ENCODE measurements at regions of chr9 and their contacts with region 1.

Region 1: DNA sequence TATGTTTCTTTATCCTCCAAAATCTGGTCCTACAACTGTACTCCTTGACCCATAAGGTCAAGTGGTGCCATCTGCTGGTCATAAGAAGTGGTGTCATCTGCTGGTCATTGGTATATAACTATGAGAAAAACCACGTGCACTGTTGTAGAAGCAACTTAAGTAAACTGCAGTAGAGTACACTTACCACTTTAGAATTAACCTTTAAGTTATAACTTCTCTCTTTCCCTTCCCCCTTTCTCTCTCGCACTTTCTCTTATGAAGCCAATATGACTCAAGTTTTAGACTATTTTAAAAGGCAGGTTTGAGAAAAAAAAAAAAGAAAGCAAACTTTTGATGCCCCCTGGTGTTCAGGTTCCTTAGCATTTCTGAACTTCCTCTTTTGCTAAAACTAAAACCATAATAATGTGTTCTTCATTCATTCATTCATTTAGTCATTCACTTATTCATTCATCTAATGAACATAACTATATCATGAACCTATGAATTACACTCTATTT is 12.8 kb upstream of the MTAP start:
- DNase-seq: no peak
- ATAC-seq: peak; percentile 71 to 95 (median 88)
- H3K4me3 ChIP-seq: peak overlapping the region; percentile 28
- H3K27ac ChIP-seq: no peak overlapping the region
- H3K4me1 ChIP-seq: no peaks in the 10 kb centered on the region
- H3K27me3 ChIP-seq: peaks cover 0 to 11% (median 7%) of the 10 kb centered on the region in 3 donors
- CTCF ChIP-seq: peak; percentile 81

Region 2: DNA sequence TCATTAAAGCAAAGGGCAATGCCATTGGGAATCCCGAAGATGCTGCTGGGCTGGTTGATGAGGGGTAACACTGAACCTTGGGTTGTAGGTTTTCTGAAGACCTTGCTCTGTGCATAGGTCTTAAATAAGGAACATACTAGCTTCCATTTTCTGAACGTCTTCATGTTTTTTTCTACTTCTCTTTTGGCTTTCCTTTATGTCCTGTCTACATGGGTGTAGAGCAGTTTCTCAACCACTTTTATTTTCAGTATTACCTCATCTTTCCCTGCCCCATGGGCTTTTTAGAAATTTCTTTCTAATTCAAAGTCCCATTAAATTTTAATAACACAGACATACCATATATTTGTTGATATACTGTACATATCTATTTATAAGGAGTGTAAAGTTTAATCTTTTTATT is 549.7 kb before region 1 on chr9 and contains the start of gene IFNA14:
- intact Hi-C with region 1: loop called in 1 of 2 experiments (anchors 5 kb)
- DNase-seq: no peak
- ATAC-seq: no peak
- H3K4me3 ChIP-seq: no peak within 1 kb of the TSS
- H3K27ac ChIP-seq: no peak within 1 kb of the TSS
- H3K4me1 ChIP-seq: no peaks in the 10 kb centered on the region
- H3K27me3 ChIP-seq: no peaks in the 10 kb centered on the region
- CTCF ChIP-seq: no peak
- total RNA-seq, gene IFNA14: not detected

Region 3: GRCh38 chr9:21326526-21327139 is 463.0 kb before region 1 on chr9:
- intact Hi-C with region 1: loop called (anchors 5 to 10 kb)
- DNase-seq: no peak
- ATAC-seq: peak; percentile 61 to 90 (median 70)
- H3K4me3 ChIP-seq: no peak overlapping the region
- H3K27ac ChIP-seq: no peak overlapping the region
- H3K4me1 ChIP-seq: peaks cover 41% of the 10 kb centered on the region
- H3K27me3 ChIP-seq: no peaks in the 10 kb centered on the region
- CTCF ChIP-seq: peak; percentile 72

Region 4: GRCh38 chr9:21334701-21335632 is 454.6 kb before region 1 on chr9 and contains the start of gene KLHL9:
- intact Hi-C with region 1: loop called in 1 of 2 experiments (anchors 10 kb)
- DNase-seq: peak; percentile 93 to 97
- ATAC-seq: peak; percentile 99 to 100 (median 99)
- H3K4me3 ChIP-seq: peak within 1 kb of the TSS; percentile 96
- H3K27ac ChIP-seq: peak within 1 kb of the TSS; percentile 98
- H3K4me1 ChIP-seq: peaks cover 41% of the 10 kb centered on the region
- H3K27me3 ChIP-seq: no peaks in the 10 kb centered on the region
- CTCF ChIP-seq: no peak
- total RNA-seq, gene KLHL9: 7.5 to 10.2 (median 8.0) TPM

Region 5: GRCh38 chr9:21465859-21466518 is 323.6 kb before region 1 on chr9:
- intact Hi-C with region 1: loop called (anchors 5 to 10 kb)
- DNase-seq: no peak
- ATAC-seq: no peak
- H3K4me3 ChIP-seq: no peak overlapping the region
- H3K27ac ChIP-seq: no peak overlapping the region
- H3K4me1 ChIP-seq: no peaks in the 10 kb centered on the region
- H3K27me3 ChIP-seq: no peaks in the 10 kb centered on the region
- CTCF ChIP-seq: peak; percentile 32

Region 6: DNA sequence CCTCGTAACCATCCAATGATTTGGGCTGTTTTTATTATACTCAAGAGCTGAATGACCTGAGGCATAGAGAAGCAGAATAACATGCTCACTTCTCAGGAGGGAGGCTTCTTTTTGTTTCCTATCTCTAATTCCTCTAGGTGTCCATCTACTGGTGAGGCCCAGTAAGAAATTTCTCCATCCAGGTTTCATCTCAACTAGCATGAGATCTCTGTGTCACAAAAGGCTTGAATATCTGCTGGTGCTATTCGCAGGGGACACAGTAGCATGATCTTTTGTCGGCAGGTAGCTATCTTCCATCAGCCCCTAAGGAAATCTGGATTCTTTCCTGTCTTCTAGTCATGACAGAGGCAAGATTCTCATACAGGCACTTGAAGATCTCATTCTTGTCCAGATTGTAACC is 316.4 kb before region 1 on chr9:
- intact Hi-C with region 1: loop called (anchors 5 to 10 kb)
- DNase-seq: no peak
- ATAC-seq: no peak
- H3K4me3 ChIP-seq: no peak overlapping the region
- H3K27ac ChIP-seq: no peak overlapping the region
- H3K4me1 ChIP-seq: no peaks in the 10 kb centered on the region
- H3K27me3 ChIP-seq: peaks cover 0 to 6% (median 0%) of the 10 kb centered on the region in 3 donors
- CTCF ChIP-seq: no peak

Region 7: DNA sequence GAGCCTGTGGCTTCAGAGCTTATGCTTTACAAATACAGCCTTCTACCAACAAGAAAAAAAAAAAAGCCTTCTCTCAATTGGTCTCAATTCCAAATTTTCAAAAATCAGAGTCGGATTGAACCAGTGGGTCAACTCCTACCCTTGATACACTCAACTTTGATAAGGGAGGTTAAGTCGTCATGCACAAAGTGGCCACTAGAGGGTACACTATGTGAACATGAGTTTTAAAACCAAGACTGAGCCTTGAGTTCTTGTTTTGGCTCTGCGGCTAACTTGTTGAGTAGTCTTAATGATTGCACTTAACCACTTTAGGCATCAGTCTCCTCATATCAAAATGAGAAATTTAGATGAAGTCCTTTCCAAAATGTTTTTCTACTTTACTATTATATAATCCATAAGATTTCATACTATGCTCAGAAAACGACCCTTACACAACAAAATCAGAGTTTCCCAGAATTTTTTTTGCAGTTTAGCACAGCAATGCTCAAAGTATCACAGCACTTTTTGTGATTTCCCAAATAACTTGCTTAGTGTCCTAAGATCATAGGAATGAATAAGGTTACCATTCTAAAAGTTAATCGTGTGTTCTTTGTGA is 80.0 kb before region 1 on chr9:
- intact Hi-C with region 1: loop called in 1 of 2 experiments (anchors 2 kb)
- DNase-seq: no peak
- ATAC-seq: peak in 1 of 4 donors; percentile 58
- H3K4me3 ChIP-seq: no peak overlapping the region
- H3K27ac ChIP-seq: no peak overlapping the region
- H3K4me1 ChIP-seq: no peaks in the 10 kb centered on the region
- H3K27me3 ChIP-seq: no peaks in the 10 kb centered on the region
- CTCF ChIP-seq: peak; percentile 68

Measured in psoas muscle (tissue), 8 donors.